Activated naive CD4-positive, alpha-beta T cell treated with anti-CD3 and anti-CD28 coated beads for 36 hours (primary cell): ENCODE measurements at regions of chr13 and their contacts with region 1.

Region 1: GRCh38 chr13:48412881-48413351 is at the start of gene LPAR6:
- DNase-seq: peak; percentile 20
- H3K4me3 Mint-ChIP-seq: peak within 1 kb of the TSS; percentile 84
- H3K27ac Mint-ChIP-seq: peak within 1 kb of the TSS; percentile 92
- H3K4me1 Mint-ChIP-seq: peaks cover 33% of the 10 kb centered on the region
- H3K27me3 Mint-ChIP-seq: no peaks in the 10 kb centered on the region
- total RNA-seq, gene LPAR6: 6.1 to 6.6 TPM

Region 2: DNA sequence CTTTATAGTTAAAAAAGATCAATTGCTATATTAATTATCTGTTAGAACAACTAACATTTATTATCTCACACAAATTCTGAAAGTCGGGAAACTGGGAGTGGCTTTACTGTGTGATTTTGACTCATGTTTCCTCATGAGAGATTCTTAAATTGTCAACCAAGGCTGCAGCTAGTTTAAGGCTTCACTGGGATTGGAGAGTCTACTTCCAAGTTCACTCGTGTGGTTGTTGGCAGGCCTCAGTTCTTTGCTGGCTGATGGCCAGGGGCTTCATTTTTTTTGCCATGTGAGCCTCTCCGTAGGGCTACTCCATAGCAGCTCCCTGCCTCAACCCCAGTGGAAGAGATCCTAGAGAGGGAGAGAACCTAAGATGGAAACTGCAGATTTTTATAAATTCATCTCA is 24.5 kb after region 1 on chr13:
- CTCF ChIA-PET with region 1: no interaction called
- intact Hi-C with region 1: loop called (anchors 1 kb)
- DNase-seq: no peak
- H3K4me3 Mint-ChIP-seq: no peak overlapping the region
- H3K27ac Mint-ChIP-seq: no peak overlapping the region
- H3K4me1 Mint-ChIP-seq: peaks cover 25% of the 10 kb centered on the region
- H3K27me3 Mint-ChIP-seq: no peaks in the 10 kb centered on the region

Region 3: DNA sequence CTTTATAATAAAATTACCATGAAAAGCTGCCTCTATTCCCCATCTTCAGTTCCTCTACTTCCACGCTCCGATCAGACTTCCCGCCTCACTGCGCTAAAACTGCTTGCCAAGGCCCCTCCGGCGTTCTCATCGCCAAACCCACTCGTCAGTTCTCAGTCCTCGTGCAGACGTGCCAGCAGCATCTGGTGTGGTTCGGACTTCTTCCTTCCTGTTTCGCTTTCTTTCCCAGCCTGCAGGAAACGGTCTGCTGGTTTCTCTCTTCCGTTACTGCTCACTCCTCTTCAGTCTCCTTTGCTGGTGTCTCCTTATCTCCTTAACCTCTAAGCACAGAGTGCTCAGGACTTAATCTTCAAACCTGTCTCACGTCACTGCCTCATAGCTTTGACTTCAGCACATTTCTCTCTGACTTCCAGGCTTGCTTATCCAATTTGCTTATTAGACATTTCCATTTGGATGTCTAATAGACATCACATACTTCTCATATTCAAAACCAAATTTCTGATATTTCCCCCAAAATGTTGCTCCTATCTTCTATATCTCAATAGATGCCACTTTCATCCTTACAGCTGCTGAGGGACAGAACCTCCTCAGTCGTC is 79.7 kb after region 1 on chr13:
- CTCF ChIA-PET with region 1: no interaction called
- intact Hi-C with region 1: loop called (anchors 1 kb)
- DNase-seq: peak; percentile 74
- H3K4me3 Mint-ChIP-seq: no peak overlapping the region
- H3K27ac Mint-ChIP-seq: no peak overlapping the region
- H3K4me1 Mint-ChIP-seq: peaks cover 39% of the 10 kb centered on the region
- H3K27me3 Mint-ChIP-seq: no peaks in the 10 kb centered on the region

Region 4: DNA sequence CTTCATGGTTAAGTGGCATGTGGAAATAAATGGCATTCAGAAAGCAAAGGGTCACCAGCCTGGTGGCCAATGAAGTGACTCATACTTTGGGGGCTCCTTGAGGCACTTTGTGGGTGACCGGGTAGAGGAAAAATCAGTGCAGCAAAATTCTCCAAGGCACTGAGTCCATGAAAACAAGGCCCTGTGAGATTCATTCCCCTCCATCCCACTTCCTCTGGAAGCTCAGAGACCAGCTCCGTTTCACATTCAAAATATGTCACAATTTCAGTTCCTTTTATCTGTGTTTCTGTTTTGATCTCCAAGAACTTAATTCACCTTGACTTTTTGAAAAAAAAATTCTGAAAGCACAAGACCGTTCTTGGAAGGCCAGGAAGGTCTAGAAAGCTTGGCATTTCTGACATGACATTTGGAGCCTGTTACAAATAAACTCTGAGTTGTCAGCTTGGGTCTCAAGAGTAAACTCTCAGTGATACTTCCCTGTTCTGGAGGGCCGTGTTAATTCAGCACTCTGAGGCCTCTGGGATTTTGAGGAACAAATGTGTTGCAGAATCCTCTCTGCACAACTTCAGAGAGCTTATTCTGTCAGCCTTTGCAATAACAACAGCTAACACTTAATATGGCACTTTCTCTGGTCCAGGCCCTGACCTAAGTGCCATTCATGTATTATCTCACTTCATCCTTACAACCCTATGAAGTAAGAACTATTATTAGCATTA is 247.6 kb after region 1 on chr13:
- CTCF ChIA-PET with region 1: no interaction called
- intact Hi-C with region 1: no loop called
- DNase-seq: no peak
- H3K4me3 Mint-ChIP-seq: no peak overlapping the region
- H3K27ac Mint-ChIP-seq: no peak overlapping the region
- H3K4me1 Mint-ChIP-seq: peaks cover 17% of the 10 kb centered on the region
- H3K27me3 Mint-ChIP-seq: no peaks in the 10 kb centered on the region